ENCODE measurements at regions of chr5 and their contacts with region 1.

Region 1: DNA sequence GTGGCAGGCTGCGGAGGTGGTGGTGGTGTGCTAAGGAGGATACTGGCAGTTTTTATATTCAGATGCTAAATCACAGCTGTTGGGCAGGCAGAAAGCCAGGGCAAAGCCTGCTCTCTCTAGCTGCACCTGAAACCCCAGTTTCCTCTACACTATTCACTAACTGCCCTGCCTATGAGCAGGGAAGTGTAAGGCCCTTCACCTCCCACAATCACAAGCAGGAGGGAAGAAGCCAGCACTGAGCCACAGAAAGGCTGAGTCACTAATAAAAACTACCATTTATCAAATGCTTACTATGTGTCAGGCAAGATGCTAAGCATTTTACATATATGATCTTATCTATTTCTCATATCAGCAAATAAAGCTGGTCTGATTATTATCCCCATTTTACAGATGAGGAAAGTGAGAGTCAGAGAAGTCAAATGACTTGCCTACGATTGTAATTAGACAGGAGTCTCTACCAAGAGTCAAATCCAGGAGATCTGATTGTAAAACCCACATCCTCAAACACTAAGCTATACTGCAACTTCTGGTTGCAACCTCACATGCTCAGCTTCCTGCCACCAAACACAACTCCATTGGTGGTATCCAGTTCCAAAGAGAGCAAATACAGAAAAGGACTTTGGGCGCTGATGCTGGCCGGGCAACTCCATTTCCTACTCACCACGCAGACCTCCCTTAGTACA is 17.7 kb upstream of the IL6ST start:
- DNase-seq: peak; percentile 56
- ATAC-seq: peak; percentile 80
- H3K4me3 ChIP-seq: no peak overlapping the region
- H3K27ac ChIP-seq: peak overlapping the region; percentile 96
- H3K4me1 ChIP-seq: peaks cover 20% of the 10 kb centered on the region
- H3K27me3 ChIP-seq: no peaks in the 10 kb centered on the region
- CTCF ChIP-seq: no peak

Region 2: GRCh38 chr5:56056875-56057274 is 44.5 kb after region 1 on chr5:
- CTCF ChIA-PET with region 1: no interaction called
- POLR2A ChIA-PET with region 1: no interaction called
- intact Hi-C with region 1: loop called (anchors 1 kb)
- DNase-seq: no peak
- ATAC-seq: no peak
- H3K4me3 ChIP-seq: no peak overlapping the region
- H3K27ac ChIP-seq: no peak overlapping the region
- H3K4me1 ChIP-seq: peaks cover 15% of the 10 kb centered on the region
- H3K27me3 ChIP-seq: no peaks in the 10 kb centered on the region
- CTCF ChIP-seq: no peak

Region 3: DNA sequence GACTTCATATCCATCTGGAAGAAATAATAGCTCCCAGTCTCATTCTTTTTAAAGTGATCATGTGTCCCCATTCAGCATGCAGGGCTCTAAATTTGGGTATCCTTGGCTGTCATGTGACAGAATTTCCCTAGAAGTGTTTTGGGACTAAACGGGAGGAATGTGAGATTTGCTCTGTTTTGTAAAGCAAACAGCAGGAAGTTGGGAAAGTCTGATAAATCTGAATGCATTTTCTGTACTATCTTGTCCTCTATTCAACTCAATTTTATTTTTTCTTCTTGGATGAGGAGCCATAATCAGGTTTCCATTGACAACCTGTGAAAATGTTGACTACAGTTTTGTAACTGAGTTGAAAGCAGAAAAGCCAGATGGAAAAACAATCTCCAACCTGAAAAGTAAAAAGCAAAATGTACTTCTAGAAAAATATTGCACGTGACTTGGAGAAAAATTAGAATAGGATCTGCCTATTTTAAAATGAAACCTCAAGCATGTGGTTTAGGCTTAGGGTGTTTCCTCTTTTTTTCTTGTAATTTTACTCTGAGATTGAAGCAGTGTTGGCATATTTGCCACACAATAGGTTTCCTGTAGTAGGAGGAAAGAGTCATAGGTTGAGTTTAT is 58.5 kb after region 1 on chr5:
- CTCF ChIA-PET with region 1: no interaction called
- POLR2A ChIA-PET with region 1: no interaction called
- intact Hi-C with region 1: no loop called
- DNase-seq: no peak
- ATAC-seq: no peak
- H3K4me3 ChIP-seq: no peak overlapping the region
- H3K27ac ChIP-seq: no peak overlapping the region
- H3K4me1 ChIP-seq: no peaks in the 10 kb centered on the region
- H3K27me3 ChIP-seq: no peaks in the 10 kb centered on the region
- CTCF ChIP-seq: no peak

Region 4: DNA sequence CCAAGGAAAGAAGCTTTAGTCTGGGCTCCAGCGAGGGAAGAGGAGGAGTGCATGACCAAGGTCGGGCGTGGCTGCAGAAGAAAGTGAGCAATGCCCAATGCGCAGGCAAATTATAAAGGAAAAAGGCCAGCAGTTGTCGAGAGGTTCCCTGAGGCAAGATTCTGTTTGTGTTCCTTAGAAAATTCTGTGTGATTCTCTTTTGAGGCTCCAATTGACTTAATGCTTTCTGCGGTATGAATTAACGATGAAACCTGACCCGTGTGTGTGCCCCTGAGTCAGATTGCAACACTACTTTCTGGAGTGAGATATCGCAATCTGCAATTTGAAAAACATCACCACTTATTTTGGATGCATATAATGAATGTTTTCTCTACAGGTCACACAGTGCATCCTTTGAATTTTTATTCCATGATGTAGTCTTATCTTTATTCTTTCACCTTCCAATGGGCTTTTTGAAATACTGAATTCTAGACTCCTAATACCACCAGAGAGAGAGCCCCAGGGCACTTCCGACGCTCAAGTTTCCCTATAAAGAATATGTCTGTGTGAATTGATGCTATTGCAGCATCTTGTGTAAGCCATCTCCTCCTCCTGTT is 100.2 kb after region 1 on chr5:
- CTCF ChIA-PET with region 1: no interaction called
- POLR2A ChIA-PET with region 1: no interaction called
- intact Hi-C with region 1: no loop called
- DNase-seq: peak; percentile 14
- ATAC-seq: no peak
- H3K4me3 ChIP-seq: no peak overlapping the region
- H3K27ac ChIP-seq: no peak overlapping the region
- H3K4me1 ChIP-seq: no peaks in the 10 kb centered on the region
- H3K27me3 ChIP-seq: no peaks in the 10 kb centered on the region
- CTCF ChIP-seq: no peak

Measured in PC-3 (cell line).